HEK293 (cell line): ENCODE measurements at regions of chr5 and their contacts with region 1.

Region 1: GRCh38 chr5:160439205-160439600 is 17.5 kb downstream of the PTTG1 start:
- H3K4me3 ChIP-seq: peak overlapping the region; percentile 31
- H3K27ac ChIP-seq: no peak overlapping the region
- H3K4me1 ChIP-seq: no peaks in the 10 kb centered on the region; the same call in 1 of the 2 replicates
- CTCF ChIP-seq: peak; percentile 34

Region 2: DNA sequence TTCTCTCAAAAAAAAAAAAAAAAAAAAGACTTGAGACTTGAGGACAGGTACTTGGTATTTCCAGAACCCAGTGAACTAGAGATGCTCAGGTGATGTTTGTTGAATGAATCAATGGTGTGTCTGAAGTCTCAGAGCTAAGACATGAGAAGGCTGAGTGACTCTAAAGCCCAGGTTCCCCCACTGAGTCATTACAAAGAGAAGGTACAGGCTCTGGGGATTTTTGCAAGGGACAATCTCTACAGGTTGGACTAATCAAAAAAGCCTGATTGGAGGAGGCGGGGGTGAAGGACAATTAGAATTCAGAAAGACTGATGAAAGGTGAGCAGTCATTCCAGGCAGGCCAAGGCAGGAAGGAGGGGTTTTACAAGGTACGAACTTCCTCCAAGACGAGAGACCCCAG is 218.1 kb before region 1 on chr5:
- CTCF ChIA-PET with region 1: no interaction called
- POLR2A ChIA-PET with region 1: no interaction called
- H3K4me3 ChIP-seq: no peak overlapping the region
- H3K27ac ChIP-seq: no peak overlapping the region
- H3K4me1 ChIP-seq: no peaks in the 10 kb centered on the region
- CTCF ChIP-seq: no peak

Region 3: DNA sequence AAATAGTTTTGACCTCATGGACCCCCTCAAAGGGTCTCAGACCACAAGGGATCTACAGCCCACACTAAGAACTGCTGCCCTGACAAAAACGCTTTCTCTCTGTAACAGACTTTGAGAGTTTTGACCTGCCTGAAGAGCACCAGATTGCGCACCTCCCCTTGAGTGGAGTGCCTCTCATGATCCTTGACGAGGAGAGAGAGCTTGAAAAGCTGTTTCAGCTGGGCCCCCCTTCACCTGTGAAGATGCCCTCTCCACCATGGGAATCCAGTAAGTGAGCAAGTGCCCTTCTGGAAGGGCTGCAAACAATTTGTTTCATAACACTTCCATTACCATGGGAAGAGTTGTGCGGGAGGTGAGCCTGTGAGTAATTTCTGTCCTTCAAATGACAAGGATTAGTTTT is 11.6 kb before region 1 on chr5:
- CTCF ChIA-PET with region 1: interaction called, 56 read pairs
- POLR2A ChIA-PET with region 1: interaction called, 7 read pairs
- H3K4me3 ChIP-seq: no peak overlapping the region
- H3K27ac ChIP-seq: no peak overlapping the region
- H3K4me1 ChIP-seq: no peaks in the 10 kb centered on the region; the same call in 1 of the 2 replicates
- CTCF ChIP-seq: no peak

Region 4: DNA sequence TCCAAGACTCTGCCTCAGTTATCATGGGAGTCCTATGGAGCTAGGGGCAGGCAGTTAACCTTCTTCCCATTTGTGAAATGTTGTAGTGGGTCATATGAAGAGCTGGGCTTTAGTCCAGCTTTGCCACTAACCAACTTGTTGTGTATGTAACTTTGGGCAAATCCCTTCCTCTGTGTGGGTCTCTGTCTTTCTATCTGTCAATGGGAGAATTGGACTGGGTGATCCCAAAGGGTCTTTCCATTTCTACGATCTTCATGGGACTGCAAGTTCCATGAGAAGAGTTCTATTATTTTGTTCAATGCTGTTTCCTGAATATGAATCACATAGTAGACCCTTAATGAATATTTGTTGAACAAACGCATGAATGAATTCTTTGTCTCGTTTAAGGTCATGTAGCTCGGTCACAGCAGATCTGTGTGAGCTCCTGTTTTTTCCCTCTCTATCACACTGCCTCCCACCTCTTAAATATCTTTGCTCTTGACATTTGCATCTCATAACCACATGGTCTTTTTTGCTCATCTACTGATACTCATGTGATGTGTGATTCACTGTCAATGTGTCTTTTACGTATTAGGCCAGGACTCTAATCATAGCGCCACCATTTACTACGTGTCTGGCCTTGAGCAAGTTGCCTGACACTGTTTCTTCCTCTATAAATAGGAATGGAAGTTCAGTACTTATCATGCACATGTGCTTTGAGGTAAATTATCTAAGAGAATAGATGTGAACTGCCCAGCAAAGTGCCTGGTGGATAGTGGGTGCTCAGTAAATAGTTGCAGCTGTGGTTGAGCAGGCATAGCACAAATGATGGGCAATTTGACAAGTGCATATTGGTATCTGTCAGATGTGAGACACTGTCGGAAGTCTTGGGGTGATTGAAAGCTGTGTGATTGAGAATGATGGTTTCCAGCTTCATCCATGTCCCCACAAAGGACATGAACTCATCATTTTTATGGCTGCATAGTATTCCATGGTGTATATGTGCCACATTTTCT is 19.9 kb after region 1 on chr5:
- CTCF ChIA-PET with region 1: interaction called, 29 read pairs
- POLR2A ChIA-PET with region 1: no interaction called
- H3K4me3 ChIP-seq: no peak overlapping the region
- H3K27ac ChIP-seq: no peak overlapping the region
- H3K4me1 ChIP-seq: peaks cover 4% of the 10 kb centered on the region; the same call in 1 of the 2 replicates
- CTCF ChIP-seq: no peak

Region 5: DNA sequence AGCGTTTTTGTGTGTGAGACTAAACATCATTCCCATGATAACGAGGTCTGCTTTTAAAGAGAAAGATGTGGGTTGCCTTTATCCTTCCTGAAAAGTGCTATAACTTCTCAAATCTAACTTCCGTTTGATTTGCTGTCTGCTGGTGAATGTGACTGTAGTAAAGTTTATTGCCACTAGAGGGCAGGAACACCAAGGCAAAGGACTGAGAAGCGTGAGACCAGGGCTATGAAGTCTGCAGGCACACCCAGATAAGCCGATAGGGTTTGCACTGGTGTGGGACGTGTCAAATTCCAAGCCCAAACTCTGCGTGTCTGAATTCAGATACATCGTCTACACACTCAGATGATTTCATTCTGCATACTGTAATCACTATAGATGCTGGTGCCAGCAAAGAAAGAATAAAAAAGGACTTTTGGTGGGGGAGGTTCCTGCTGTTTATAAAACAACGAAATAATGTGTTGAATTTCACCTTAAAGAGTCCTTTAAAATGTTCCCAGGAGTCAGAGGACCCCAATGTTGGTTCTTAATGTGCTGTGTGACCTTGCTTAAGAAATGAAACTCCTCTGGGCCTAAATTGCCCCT is 69.7 kb after region 1 on chr5:
- CTCF ChIA-PET with region 1: interaction called, 26 read pairs
- POLR2A ChIA-PET with region 1: no interaction called
- H3K4me3 ChIP-seq: no peak overlapping the region
- H3K27ac ChIP-seq: no peak overlapping the region
- H3K4me1 ChIP-seq: no peaks in the 10 kb centered on the region
- CTCF ChIP-seq: peak; percentile 81